HCT116 (cell line): ENCODE measurements at regions of chr17 and their contacts with region 1.

Region 1: GRCh38 chr17:50816771-50817751 is 18.3 kb upstream of the WFIKKN2 start:
- DNase-seq: peak; percentile 34
- ATAC-seq: peak; percentile 86
- H3K4me3 ChIP-seq: peak overlapping the region; percentile 29 to 50
- H3K27ac ChIP-seq: peak overlapping the region; percentile 20
- H3K4me1 ChIP-seq: peaks cover 20 to 32% of the 10 kb centered on the region in 2 experiments
- H3K27me3 ChIP-seq: no peaks in the 10 kb centered on the region
- CTCF ChIP-seq: peak; percentile 73 to 100 (median 99)
- POLR2A ChIP-seq: no peak
- RAD21 ChIP-seq: peak; percentile 52

Region 2: DNA sequence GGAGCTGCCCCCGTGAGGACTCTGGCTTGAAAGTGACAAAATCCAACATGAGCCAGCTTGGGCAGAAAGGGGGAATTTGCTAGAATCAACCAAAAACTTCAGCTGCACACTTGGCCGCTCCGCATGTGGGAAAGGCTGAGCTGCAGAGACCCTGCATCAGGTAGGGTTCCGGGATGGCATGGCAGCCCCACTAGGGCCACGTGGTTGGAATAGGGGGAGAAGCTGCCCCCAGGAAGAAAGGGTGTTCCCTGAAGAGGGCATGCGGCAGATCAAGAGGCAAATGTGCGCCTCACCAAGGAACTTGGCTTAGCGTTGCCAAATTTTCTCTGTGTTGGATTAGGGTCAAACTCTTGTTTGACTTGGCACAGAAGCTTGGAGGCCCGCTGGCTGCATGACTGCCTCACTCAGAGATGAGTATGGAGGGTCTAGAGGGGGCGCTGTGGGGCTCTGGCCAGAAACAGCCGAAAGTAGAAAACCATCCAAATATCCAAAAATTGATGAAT is 10.9 kb before region 1 on chr17:
- CTCF ChIA-PET with region 1: interaction called, 10 read pairs
- POLR2A ChIA-PET with region 1: no interaction called
- RAD21 ChIA-PET with region 1: no interaction called
- intact Hi-C with region 1: no loop called
- DNase-seq: no peak
- ATAC-seq: peak; percentile 67
- H3K4me3 ChIP-seq: no peak overlapping the region
- H3K27ac ChIP-seq: no peak overlapping the region
- H3K4me1 ChIP-seq: peaks cover 0 to 14% of the 10 kb centered on the region in 2 experiments; a peak in 2 of 4 replicates
- H3K27me3 ChIP-seq: no peaks in the 10 kb centered on the region
- CTCF ChIP-seq: peak in 2 of 3 experiments; percentile 51 to 53; a peak in 4 of 6 replicates
- POLR2A ChIP-seq: no peak
- RAD21 ChIP-seq: no peak

Region 3: GRCh38 chr17:50956750-50957523 is 139.9 kb after region 1 on chr17:
- CTCF ChIA-PET with region 1: no interaction called
- POLR2A ChIA-PET with region 1: no interaction called
- RAD21 ChIA-PET with region 1: no interaction called
- intact Hi-C with region 1: loop called (anchors 1 kb)
- DNase-seq: peak; percentile 31
- ATAC-seq: peak; percentile 89
- H3K4me3 ChIP-seq: no peak overlapping the region
- H3K27ac ChIP-seq: no peak overlapping the region
- H3K4me1 ChIP-seq: peaks cover 23 to 41% of the 10 kb centered on the region in 2 experiments
- H3K27me3 ChIP-seq: no peaks in the 10 kb centered on the region
- CTCF ChIP-seq: peak; percentile 79 to 94 (median 90)
- POLR2A ChIP-seq: no peak
- RAD21 ChIP-seq: peak; percentile 84